ENCODE measurements at regions of chr6 and their contacts with region 1.

Region 1: GRCh38 chr6:88982720-88983119 is 19.3 kb upstream of the RNGTT start:
- DNase-seq: peak; percentile 90
- H3K4me3 Mint-ChIP-seq: no peak overlapping the region
- H3K27ac Mint-ChIP-seq: no peak overlapping the region
- H3K4me1 Mint-ChIP-seq: no peaks in the 10 kb centered on the region
- H3K27me3 Mint-ChIP-seq: no peaks in the 10 kb centered on the region
- CTCF ChIP-seq: peak; percentile 82

Region 2: GRCh38 chr6:88813045-88813444 is 169.7 kb before region 1 on chr6:
- CTCF ChIA-PET with region 1: no interaction called
- POLR2A ChIA-PET with region 1: no interaction called
- intact Hi-C with region 1: no loop called
- DNase-seq: no peak
- H3K4me3 Mint-ChIP-seq: no peak overlapping the region
- H3K27ac Mint-ChIP-seq: no peak overlapping the region
- H3K4me1 Mint-ChIP-seq: peaks cover 6% of the 10 kb centered on the region
- H3K27me3 Mint-ChIP-seq: no peaks in the 10 kb centered on the region
- CTCF ChIP-seq: no peak

Region 3: GRCh38 chr6:89022798-89023197 is 40.1 kb after region 1 on chr6:
- CTCF ChIA-PET with region 1: interaction called, 16 read pairs
- POLR2A ChIA-PET with region 1: interaction called, 3 read pairs
- intact Hi-C with region 1: no loop called
- DNase-seq: peak; percentile 40
- H3K4me3 Mint-ChIP-seq: no peak overlapping the region
- H3K27ac Mint-ChIP-seq: no peak overlapping the region
- H3K4me1 Mint-ChIP-seq: peaks cover 24% of the 10 kb centered on the region
- H3K27me3 Mint-ChIP-seq: no peaks in the 10 kb centered on the region
- CTCF ChIP-seq: no peak

Region 4: GRCh38 chr6:89050155-89050554 is 67.4 kb after region 1 on chr6:
- CTCF ChIA-PET with region 1: interaction called, 9 read pairs
- POLR2A ChIA-PET with region 1: interaction called, 10 read pairs
- intact Hi-C with region 1: no loop called
- DNase-seq: peak; percentile 95
- H3K4me3 Mint-ChIP-seq: peak overlapping the region; percentile 45
- H3K27ac Mint-ChIP-seq: peak overlapping the region; percentile 77
- H3K4me1 Mint-ChIP-seq: peaks cover 28% of the 10 kb centered on the region
- H3K27me3 Mint-ChIP-seq: no peaks in the 10 kb centered on the region
- CTCF ChIP-seq: no peak

Region 5: GRCh38 chr6:89110284-89110683 is 127.6 kb after region 1 on chr6:
- CTCF ChIA-PET with region 1: interaction called, 20 read pairs
- POLR2A ChIA-PET with region 1: no interaction called
- intact Hi-C with region 1: no loop called
- DNase-seq: no peak
- H3K4me3 Mint-ChIP-seq: no peak overlapping the region
- H3K27ac Mint-ChIP-seq: no peak overlapping the region
- H3K4me1 Mint-ChIP-seq: no peaks in the 10 kb centered on the region
- H3K27me3 Mint-ChIP-seq: no peaks in the 10 kb centered on the region
- CTCF ChIP-seq: no peak

Region 6: DNA sequence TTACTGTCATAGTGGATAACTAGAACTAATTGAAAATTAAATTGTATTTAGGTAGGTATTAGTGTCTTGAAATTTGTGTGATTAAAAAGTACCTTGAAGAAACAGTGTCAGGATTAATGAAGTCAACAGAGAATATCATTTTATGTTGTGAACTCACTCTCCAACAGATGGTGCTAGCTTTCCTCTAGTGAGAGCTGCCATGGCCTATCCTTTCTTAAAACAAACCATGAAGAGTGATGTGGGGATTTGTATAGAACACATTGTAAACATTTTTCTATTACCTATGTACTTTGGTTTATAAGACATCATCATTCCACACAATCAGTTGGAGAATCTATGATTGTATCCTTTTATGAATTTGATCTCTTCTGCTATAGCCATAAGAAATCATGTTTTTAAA is 139.9 kb after region 1 on chr6:
- CTCF ChIA-PET with region 1: interaction called, 38 read pairs
- POLR2A ChIA-PET with region 1: interaction called, 8 read pairs
- intact Hi-C with region 1: loop called (anchors 1 kb)
- DNase-seq: peak; percentile 48
- H3K4me3 Mint-ChIP-seq: no peak overlapping the region
- H3K27ac Mint-ChIP-seq: no peak overlapping the region
- H3K4me1 Mint-ChIP-seq: no peaks in the 10 kb centered on the region
- H3K27me3 Mint-ChIP-seq: no peaks in the 10 kb centered on the region
- CTCF ChIP-seq: peak; percentile 70

Region 7: GRCh38 chr6:89242574-89243330 is 260.0 kb after region 1 on chr6:
- CTCF ChIA-PET with region 1: interaction called, 74 read pairs
- POLR2A ChIA-PET with region 1: interaction called, 6 read pairs
- intact Hi-C with region 1: loop called (anchors 1 kb)
- DNase-seq: peak; percentile 62
- H3K4me3 Mint-ChIP-seq: no peak overlapping the region
- H3K27ac Mint-ChIP-seq: no peak overlapping the region
- H3K4me1 Mint-ChIP-seq: peaks cover 6% of the 10 kb centered on the region
- H3K27me3 Mint-ChIP-seq: peaks cover 28% of the 10 kb centered on the region
- CTCF ChIP-seq: peak; percentile 56

Region 8: GRCh38 chr6:89371849-89372505 is 389.3 kb after region 1 on chr6:
- CTCF ChIA-PET with region 1: interaction called, 12 read pairs
- POLR2A ChIA-PET with region 1: no interaction called
- intact Hi-C with region 1: loop called (anchors 2 kb)
- DNase-seq: peak; percentile 61
- H3K4me3 Mint-ChIP-seq: no peak overlapping the region
- H3K27ac Mint-ChIP-seq: no peak overlapping the region
- H3K4me1 Mint-ChIP-seq: no peaks in the 10 kb centered on the region
- H3K27me3 Mint-ChIP-seq: no peaks in the 10 kb centered on the region
- CTCF ChIP-seq: peak; percentile 81

Measured in MCF 10A (cell line).